ENCODE measurements at regions of chrX and their contacts with region 1.

Region 1: GRCh38 chrX:55160685-55161552 is 59.2 kb upstream of the PAGE5 start:
- DNase-seq: peak; percentile 89 to 90
- ATAC-seq: peak; percentile 98 to 100 (median 100)
- H3K4me3 ChIP-seq: peak overlapping the region; percentile 40 to 67 (median 62)
- H3K27ac ChIP-seq: peak overlapping the region; percentile 88 to 95 (median 92)
- H3K4me1 ChIP-seq: peaks cover 0 to 17% (median 3%) of the 10 kb centered on the region in 9 donors
- H3K27me3 ChIP-seq: no peaks in the 10 kb centered on the region
- CTCF ChIP-seq: peak in 8 of 9 donors; percentile 14 to 68 (median 46)

Region 2: DNA sequence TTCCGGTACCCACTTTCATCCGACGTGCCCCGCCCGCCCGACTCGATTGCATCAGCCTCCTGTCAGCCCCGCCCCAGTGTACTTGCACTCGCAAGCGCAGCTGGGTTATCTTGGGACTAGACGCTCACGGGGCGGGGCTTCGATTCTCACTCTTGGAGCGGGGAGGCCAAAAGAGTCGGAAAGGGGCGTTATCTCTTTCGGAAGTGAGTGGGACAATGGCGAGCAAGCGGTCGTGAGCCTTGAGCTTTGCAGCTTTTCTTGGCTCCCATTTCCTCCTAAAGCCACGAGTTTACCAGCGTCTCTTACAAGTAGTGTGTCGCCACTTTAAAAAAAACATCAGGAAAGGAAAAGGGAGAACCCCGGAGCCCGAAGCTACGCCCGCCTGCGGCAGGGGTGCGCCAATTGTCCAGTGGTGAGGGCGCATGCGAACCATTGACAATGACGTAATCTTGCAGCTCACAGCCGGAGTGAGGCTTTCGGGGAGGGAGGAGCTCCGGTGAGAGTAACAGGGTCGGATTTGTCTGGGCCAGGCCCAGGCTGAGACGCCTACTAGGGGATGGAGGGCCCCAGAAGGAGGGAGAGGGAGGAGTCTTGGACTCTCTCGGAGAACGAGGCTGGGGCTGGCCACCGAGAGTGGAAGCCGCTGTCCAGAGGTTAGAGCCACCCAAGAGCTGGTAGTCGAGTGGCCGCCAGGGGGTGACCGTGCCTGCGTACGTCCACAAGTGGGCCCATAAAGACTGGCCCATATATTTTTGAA is 521.4 kb before region 1 on chrX:
- intact Hi-C with region 1: loop called in 1 of 10 experiments (anchors 10 kb)
- DNase-seq: peak; percentile 92 to 95
- ATAC-seq: peak; percentile 95 to 99 (median 98)
- H3K4me3 ChIP-seq: peak overlapping the region in 9 of 10 donors; percentile 23 to 59 (median 53)
- H3K27ac ChIP-seq: peak overlapping the region; percentile 78 to 94 (median 90)
- H3K4me1 ChIP-seq: peaks cover 0 to 16% (median 4%) of the 10 kb centered on the region in 9 donors
- H3K27me3 ChIP-seq: no peaks in the 10 kb centered on the region
- CTCF ChIP-seq: peak; percentile 41 to 77 (median 64)

Region 3: GRCh38 chrX:54999717-55000598 is 161.0 kb before region 1 on chrX and contains the start of gene APEX2:
- intact Hi-C with region 1: loop called in 1 of 10 experiments (anchors 2 kb)
- DNase-seq: peak; percentile 89 to 91
- ATAC-seq: peak; percentile 95 to 99 (median 98)
- H3K4me3 ChIP-seq: peak within 1 kb of the TSS; percentile 32 to 77 (median 65)
- H3K27ac ChIP-seq: peak within 1 kb of the TSS; percentile 37 to 94 (median 88)
- H3K4me1 ChIP-seq: peaks cover 0 to 18% (median 9%) of the 10 kb centered on the region in 9 donors
- H3K27me3 ChIP-seq: peaks cover 0 to 17% (median 0%) of the 10 kb centered on the region in 7 donors
- CTCF ChIP-seq: no peak
- total RNA-seq, gene APEX2: 8.7 to 12.5 (median 9.8) TPM

Region 4: DNA sequence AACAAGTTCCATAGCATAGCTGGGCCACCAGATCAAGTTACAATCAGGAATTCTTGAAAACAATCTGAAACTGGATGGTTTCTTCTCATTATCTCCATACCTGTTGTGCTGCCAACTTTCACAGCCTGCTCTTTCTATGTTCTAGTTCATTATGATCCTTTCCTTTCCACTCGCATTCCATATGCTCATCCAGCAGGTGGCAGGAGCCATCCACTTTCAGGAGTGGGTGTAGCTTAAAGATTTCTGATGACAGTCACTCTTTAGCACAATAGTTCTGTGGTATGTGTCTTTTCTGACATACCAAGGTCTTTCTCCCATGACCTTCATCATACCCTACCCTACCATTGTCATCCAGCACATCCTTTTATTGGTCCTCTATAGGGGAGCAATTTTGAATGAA is 25.7 kb before region 1 on chrX:
- intact Hi-C with region 1: loop called in 1 of 10 experiments (anchors 2 kb)
- DNase-seq: peak; percentile 9 to 11
- ATAC-seq: peak in 6 of 8 donors; percentile 46 to 74 (median 67)
- H3K4me3 ChIP-seq: no peak overlapping the region
- H3K27ac ChIP-seq: no peak overlapping the region
- H3K4me1 ChIP-seq: no peaks in the 10 kb centered on the region
- H3K27me3 ChIP-seq: peaks cover 0 to 24% (median 0%) of the 10 kb centered on the region in 7 donors
- CTCF ChIP-seq: peak; percentile 30 to 67 (median 53)

Region 5: DNA sequence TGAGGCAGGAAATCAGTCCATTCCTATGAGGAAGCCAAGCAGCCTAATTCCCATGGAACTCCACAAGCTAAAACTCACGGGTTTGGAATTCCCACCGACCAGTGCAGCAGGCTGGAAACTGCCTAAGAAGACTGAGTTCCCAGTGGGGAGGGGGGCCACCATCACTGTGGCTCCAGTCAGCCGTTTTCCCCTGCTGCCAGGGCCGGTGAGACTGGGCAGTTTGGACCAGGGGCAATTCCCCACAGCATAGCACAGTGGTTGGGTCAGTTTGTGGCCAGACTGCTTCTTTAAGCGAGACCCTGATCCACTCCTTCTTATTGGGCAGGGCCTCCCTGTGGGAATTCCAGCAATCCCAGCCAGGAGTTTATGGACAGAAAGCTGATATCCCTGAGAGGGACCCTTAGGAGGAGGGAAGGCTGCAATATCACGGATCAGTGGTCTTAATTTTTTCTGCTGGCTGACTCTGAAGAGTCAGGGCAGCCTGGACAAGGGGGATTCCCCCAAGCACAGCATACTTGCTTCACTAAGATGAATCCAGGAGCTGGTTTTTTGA is 79.9 kb after region 1 on chrX:
- intact Hi-C with region 1: no loop called
- DNase-seq: no peak
- ATAC-seq: no peak
- H3K4me3 ChIP-seq: no peak overlapping the region
- H3K27ac ChIP-seq: no peak overlapping the region
- H3K4me1 ChIP-seq: no peaks in the 10 kb centered on the region
- H3K27me3 ChIP-seq: no peaks in the 10 kb centered on the region
- CTCF ChIP-seq: no peak

Region 6: DNA sequence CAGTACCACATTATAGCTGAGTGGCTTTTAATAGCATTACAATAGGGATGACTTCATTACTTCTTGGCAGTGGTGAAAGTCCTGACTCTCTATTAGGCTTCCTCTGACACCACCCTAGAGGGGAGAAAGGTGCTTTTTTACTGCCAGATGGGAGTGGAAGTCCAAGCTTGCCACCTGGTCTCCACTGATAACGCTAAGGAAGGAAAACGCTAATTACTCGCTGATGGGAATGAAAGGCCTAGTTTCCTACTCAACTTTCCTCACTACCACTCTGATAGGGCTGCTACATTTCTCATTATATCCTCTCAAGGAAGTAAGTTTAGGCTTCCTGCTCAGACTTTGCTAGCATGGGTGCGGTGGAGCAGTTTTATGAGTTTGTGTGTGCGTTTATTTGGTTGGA is 166.1 kb after region 1 on chrX:
- intact Hi-C with region 1: loop called in 1 of 10 experiments (anchors 5 kb)
- DNase-seq: peak in 1 of 2 donors; percentile 50
- ATAC-seq: peak; percentile 78 to 98 (median 94)
- H3K4me3 ChIP-seq: no peak overlapping the region
- H3K27ac ChIP-seq: peak overlapping the region in 8 of 10 donors; percentile 45 to 90 (median 68)
- H3K4me1 ChIP-seq: peaks cover 0 to 12% (median 0%) of the 10 kb centered on the region in 9 donors
- H3K27me3 ChIP-seq: peaks cover 0 to 22% (median 0%) of the 10 kb centered on the region in 7 donors
- CTCF ChIP-seq: no peak

Region 7: DNA sequence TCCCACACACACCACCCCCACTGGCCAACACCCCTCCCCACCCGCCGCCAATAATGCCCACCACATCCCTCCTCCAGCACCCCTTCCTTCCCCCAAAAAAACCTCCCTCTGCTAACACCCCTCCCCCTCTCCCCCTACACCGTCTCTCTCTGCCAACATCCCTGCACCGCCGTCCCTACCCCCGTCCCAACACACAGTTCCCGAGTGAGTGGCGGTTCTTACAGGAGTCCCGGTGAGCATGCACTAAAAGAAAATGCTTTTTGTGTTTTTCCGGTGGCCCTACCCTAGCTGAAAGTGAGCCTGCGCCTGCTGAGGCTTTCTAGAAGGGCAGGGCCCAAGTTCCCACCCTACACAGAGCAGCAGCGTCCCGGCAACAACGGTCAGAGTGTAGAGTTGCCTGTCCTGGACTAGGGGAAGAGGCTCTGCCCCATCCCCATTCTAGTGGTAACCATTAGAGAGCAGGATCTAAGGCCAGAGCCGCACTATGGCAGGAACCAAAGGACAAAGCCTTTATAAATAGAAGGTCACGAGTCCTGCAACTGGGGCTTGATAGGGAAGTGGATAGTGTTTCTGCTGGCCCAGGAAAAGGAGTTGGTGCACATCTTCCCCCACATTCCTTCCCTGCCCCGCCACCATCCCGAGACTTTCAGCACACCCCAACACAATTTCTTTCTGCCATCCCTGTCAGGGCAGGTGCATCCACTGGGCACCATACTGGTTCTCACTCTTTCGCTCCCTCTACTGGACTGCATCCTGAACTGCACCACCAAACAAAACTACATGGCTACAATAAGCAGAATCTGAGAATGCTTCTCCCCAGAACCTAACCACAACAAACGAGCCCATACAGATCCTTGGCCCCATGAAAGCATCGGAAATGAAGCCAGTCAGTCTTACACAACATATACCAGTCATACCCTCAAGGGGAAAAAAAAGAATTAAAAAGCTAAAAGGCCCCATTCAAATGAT is 181.9 kb after region 1 on chrX:
- intact Hi-C with region 1: loop called in 1 of 10 experiments (anchors 10 kb)
- DNase-seq: peak; percentile 5 to 7
- ATAC-seq: peak; percentile 43 to 84 (median 61)
- H3K4me3 ChIP-seq: peak overlapping the region in 1 of 10 donors; percentile 20
- H3K27ac ChIP-seq: peak overlapping the region in 5 of 10 donors; percentile 19 to 66 (median 41)
- H3K4me1 ChIP-seq: peaks cover 0 to 3% (median 0%) of the 10 kb centered on the region in 9 donors
- H3K27me3 ChIP-seq: peaks cover 0 to 14% (median 0%) of the 10 kb centered on the region in 7 donors
- CTCF ChIP-seq: peak in 7 of 9 donors; percentile 51 to 66 (median 54)

Region 8: DNA sequence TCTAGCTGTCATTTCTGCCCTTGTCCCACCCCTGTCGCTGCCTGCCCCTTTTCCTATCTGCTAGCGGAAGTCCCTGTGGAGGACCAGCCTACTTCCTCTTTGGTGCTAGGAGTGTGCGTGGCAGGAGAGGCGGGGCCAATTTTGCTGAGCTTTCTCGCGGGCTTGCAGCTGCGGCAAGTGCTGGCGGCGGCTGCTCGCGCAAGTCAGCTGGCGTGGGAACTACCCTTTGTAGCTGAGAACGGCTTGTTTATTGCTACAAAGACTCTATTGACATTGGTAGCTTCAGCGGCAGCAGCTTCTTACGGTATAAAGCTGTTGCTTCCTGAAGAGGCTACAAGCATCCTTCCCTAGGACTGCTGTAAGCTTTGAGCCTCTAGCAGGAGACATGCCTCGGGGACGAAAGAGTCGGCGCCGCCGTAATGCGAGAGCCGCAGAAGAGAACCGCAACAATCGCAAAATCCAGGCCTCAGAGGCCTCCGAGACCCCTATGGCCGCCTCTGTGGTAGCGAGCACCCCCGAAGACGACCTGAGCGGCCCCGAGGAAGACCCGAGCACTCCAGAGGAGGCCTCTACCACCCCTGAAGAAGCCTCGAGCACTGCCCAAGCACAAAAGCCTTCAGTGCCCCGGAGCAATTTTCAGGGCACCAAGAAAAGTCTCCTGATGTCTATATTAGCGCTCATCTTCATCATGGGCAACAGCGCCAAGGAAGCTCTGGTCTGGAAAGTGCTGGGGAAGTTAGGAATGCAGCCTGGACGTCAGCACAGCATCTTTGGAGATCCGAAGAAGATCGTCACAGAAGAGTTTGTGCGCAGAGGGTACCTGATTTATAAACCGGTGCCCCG is 291.3 kb after region 1 on chrX and contains the start of gene MAGEH1:
- intact Hi-C with region 1: loop called in 1 of 10 experiments (anchors 10 kb)
- DNase-seq: peak; percentile 80 to 87
- ATAC-seq: peak; percentile 98 to 99 (median 99)
- H3K4me3 ChIP-seq: peak within 1 kb of the TSS; percentile 64 to 86 (median 73)
- H3K27ac ChIP-seq: peak within 1 kb of the TSS; percentile 58 to 89 (median 84)
- H3K4me1 ChIP-seq: peaks cover 0 to 7% (median 0%) of the 10 kb centered on the region in 9 donors
- H3K27me3 ChIP-seq: no peaks in the 10 kb centered on the region
- CTCF ChIP-seq: no peak
- total RNA-seq, gene MAGEH1: 9.2 to 15.0 (median 11.8) TPM

Measured in heart right ventricle (tissue), 16 donors.